Caco-2 (cell line): ENCODE measurements at regions of chr9 and their contacts with region 1.

Region 1: GRCh38 chr9:32571969-32572899 is 725 bp downstream of the NDUFB6 start:
- DNase-seq: peak; percentile 74 to 78
- H3K4me3 ChIP-seq: peak overlapping the region; percentile 86
- H3K4me3 Mint-ChIP-seq: peak overlapping the region; percentile 98
- H3K27ac Mint-ChIP-seq: peak overlapping the region; percentile 100
- H3K4me1 ChIP-seq: peaks cover 5% of the 10 kb centered on the region; the same call in 1 of the 2 replicates
- H3K4me1 Mint-ChIP-seq: no peaks in the 10 kb centered on the region
- H3K27me3 ChIP-seq: no peaks in the 10 kb centered on the region
- H3K27me3 Mint-ChIP-seq: peaks cover 2% of the 10 kb centered on the region
- CTCF ChIP-seq: peak; percentile 73 to 76

Region 2: DNA sequence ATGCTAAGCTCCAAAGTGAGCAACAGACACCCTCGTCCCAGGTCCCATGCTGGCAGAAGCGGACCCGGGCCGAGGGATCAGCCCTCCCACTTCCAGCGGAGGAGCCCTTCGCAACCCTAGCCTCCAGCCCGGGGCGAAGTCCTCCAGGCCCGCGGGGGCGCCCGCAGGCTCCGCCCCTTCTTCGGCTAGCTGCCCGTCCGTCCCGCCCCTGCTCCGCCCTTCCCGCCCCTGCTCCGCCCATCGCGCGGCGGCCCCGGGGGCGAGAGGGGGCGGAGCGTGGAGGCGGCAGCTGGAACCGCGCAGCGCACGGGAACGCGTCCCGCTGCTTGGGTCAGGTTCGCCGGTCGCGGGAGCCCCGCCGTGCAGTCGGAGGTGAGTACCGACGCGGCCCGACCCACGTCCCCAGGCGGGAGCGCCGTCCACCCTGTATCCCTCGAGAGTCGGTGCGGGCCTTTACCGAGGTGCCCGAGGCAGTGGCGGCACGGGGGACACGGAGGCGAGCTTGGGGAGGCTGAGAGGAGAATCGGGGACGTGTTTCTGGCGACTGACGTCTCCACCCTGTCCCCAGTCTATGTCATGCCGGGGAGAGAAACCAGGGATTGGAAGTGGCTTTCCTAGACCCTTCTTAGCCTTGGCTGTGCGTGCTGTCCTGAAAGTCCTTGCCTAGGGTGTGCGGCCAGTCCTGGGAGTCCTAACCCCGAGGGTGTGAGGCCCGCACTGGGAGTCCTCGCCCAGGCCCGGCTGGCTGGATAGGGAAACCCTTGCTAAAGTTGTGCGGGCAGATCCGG is 187.7 kb before region 1 on chr9 and contains the start of gene ACO1:
- CTCF ChIA-PET with region 1: interaction called, 63 read pairs
- POLR2A ChIA-PET with region 1: no interaction called
- intact Hi-C with region 1: loop called (anchors 1 kb)
- DNase-seq: peak; percentile 92 to 96
- H3K4me3 ChIP-seq: peak within 1 kb of the TSS; percentile 76
- H3K4me3 Mint-ChIP-seq: peak within 1 kb of the TSS; percentile 83
- H3K27ac Mint-ChIP-seq: peak within 1 kb of the TSS; percentile 51
- H3K4me1 ChIP-seq: 0 out of 2 replicates have a peak, but pooled peaks cover 4% of the 10 kb centered on the region
- H3K4me1 Mint-ChIP-seq: peaks cover 13% of the 10 kb centered on the region
- H3K27me3 ChIP-seq: no peaks in the 10 kb centered on the region
- H3K27me3 Mint-ChIP-seq: peaks cover 8% of the 10 kb centered on the region
- CTCF ChIP-seq: no peak
- total RNA-seq, gene ACO1: 51.1 and 54.7 TPM in 2 replicates

Region 3: GRCh38 chr9:32426278-32426939 is 145.8 kb before region 1 on chr9:
- CTCF ChIA-PET with region 1: no interaction called
- POLR2A ChIA-PET with region 1: no interaction called
- intact Hi-C with region 1: loop called (anchors 2 kb)
- DNase-seq: peak; percentile 56 to 76
- H3K4me3 ChIP-seq: no peak overlapping the region
- H3K4me3 Mint-ChIP-seq: no peak overlapping the region
- H3K27ac Mint-ChIP-seq: peak overlapping the region; percentile 59
- H3K4me1 ChIP-seq: peaks cover 24% of the 10 kb centered on the region
- H3K4me1 Mint-ChIP-seq: no peaks in the 10 kb centered on the region
- H3K27me3 ChIP-seq: no peaks in the 10 kb centered on the region
- H3K27me3 Mint-ChIP-seq: no peaks in the 10 kb centered on the region
- CTCF ChIP-seq: no peak

Region 4: GRCh38 chr9:32431940-32432555 is 140.2 kb before region 1 on chr9:
- CTCF ChIA-PET with region 1: no interaction called
- POLR2A ChIA-PET with region 1: no interaction called
- intact Hi-C with region 1: loop called (anchors 1 kb)
- DNase-seq: peak; percentile 73
- H3K4me3 ChIP-seq: no peak overlapping the region
- H3K4me3 Mint-ChIP-seq: no peak overlapping the region
- H3K27ac Mint-ChIP-seq: no peak overlapping the region
- H3K4me1 ChIP-seq: peaks cover 5% of the 10 kb centered on the region
- H3K4me1 Mint-ChIP-seq: peaks cover 6% of the 10 kb centered on the region
- H3K27me3 ChIP-seq: no peaks in the 10 kb centered on the region
- H3K27me3 Mint-ChIP-seq: no peaks in the 10 kb centered on the region
- CTCF ChIP-seq: peak; percentile 68 to 77

Region 5: DNA sequence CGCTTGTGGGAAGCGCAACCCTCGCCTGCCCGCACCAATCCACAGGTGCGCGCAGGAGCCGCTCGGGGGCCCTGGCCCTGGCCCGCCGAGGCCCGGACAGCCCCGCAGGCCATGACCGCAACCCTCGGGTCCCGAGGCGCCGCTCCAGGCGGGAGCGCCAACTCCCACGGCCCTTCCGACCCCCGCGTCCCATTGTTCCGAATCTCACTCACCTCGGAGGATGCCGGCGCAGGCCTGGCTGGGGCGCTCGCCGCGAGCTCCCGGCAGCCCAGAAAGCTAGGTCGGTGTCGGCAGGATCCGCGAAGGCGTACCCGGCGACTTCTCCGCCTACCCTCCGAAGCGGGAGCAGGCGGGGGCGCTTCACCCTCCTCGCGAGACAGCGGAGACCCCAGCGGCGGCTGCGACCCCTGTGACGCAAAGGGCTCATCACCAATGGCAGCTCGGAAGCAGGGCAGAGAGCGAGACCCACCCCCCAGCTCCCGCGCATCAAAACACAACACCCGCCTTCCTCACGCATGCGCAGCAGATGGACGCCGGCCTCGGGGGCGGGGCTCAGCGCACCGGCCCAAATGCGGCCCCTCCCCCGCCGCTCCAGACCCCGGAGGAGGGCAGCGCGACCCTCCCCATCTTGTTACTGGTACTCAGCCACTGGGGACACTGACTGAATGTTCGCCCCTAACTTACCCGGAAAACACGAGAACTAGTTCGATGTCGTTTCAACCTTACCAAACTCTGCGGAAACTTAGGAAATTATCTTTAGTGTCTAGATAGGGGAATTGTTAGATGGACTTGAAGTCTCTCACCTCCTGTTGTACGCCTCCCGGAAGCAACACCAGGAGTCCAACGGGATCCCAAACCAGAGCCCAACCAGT is 21.4 kb before region 1 on chr9:
- CTCF ChIA-PET with region 1: interaction called, 25 read pairs
- POLR2A ChIA-PET with region 1: interaction called, 6 read pairs
- intact Hi-C with region 1: loop called (anchors 1 kb)
- DNase-seq: peak; percentile 96 to 97
- H3K4me3 ChIP-seq: peak overlapping the region; percentile 87
- H3K4me3 Mint-ChIP-seq: peak overlapping the region; percentile 93
- H3K27ac Mint-ChIP-seq: peak overlapping the region; percentile 96
- H3K4me1 ChIP-seq: no peaks in the 10 kb centered on the region
- H3K4me1 Mint-ChIP-seq: peaks cover 7% of the 10 kb centered on the region
- H3K27me3 ChIP-seq: no peaks in the 10 kb centered on the region
- H3K27me3 Mint-ChIP-seq: no peaks in the 10 kb centered on the region
- CTCF ChIP-seq: no peak

Region 6: GRCh38 chr9:32627394-32627944 is 55.2 kb after region 1 on chr9:
- CTCF ChIA-PET with region 1: no interaction called
- POLR2A ChIA-PET with region 1: no interaction called
- intact Hi-C with region 1: no loop called
- DNase-seq: no peak
- H3K4me3 ChIP-seq: no peak overlapping the region
- H3K4me3 Mint-ChIP-seq: no peak overlapping the region
- H3K27ac Mint-ChIP-seq: no peak overlapping the region
- H3K4me1 ChIP-seq: no peaks in the 10 kb centered on the region
- H3K4me1 Mint-ChIP-seq: no peaks in the 10 kb centered on the region
- H3K27me3 ChIP-seq: no peaks in the 10 kb centered on the region
- H3K27me3 Mint-ChIP-seq: no peaks in the 10 kb centered on the region
- CTCF ChIP-seq: no peak